ENCODE measurements at regions of chr3 and their contacts with region 1.

Region 1: GRCh38 chr3:124905849-124906248 is 18.7 kb upstream of the ITGB5 start:
- DNase-seq: no peak
- H3K4me3 Mint-ChIP-seq: no peak overlapping the region
- H3K27ac Mint-ChIP-seq: no peak overlapping the region
- H3K4me1 Mint-ChIP-seq: peaks cover under 1% of the 10 kb centered on the region
- H3K27me3 Mint-ChIP-seq: peaks cover 61% of the 10 kb centered on the region

Region 2: DNA sequence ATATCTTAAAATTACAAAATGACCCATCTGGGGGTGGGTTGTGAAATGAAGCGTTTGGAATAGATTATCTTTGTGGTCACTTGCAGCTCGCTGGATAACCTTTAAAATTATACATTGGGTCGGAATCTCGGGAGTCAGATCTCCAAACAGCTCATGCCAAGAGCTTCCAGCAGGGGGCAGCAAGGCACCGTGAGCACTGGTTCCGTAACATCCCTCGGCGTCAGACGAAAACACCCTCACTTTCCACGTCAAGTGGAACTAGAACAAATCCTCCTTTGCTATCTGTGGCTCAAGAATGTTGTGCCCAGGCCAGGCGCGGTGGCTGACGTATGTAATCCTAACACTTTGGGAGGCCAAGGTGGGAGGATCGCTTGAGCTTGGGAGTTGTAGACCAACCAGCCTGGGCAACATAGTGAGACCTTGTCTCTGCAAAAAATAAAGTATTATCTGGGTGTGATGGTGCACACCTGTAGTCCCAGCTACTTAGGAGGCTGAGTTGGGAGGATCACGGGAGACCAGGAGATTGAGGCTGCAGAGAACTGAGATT is 144.5 kb before region 1 on chr3:
- CTCF ChIA-PET with region 1: interaction called, 159 read pairs
- DNase-seq: peak; percentile 84
- H3K4me3 Mint-ChIP-seq: no peak overlapping the region
- H3K27ac Mint-ChIP-seq: no peak overlapping the region
- H3K4me1 Mint-ChIP-seq: peaks cover 4% of the 10 kb centered on the region
- H3K27me3 Mint-ChIP-seq: peaks cover 13% of the 10 kb centered on the region

Region 3: GRCh38 chr3:124768812-124769211 is 137.0 kb before region 1 on chr3:
- CTCF ChIA-PET with region 1: interaction called, 159 read pairs
- DNase-seq: peak; percentile 30
- H3K4me3 Mint-ChIP-seq: no peak overlapping the region
- H3K27ac Mint-ChIP-seq: no peak overlapping the region
- H3K4me1 Mint-ChIP-seq: no peaks in the 10 kb centered on the region
- H3K27me3 Mint-ChIP-seq: peaks cover 51% of the 10 kb centered on the region

Region 4: GRCh38 chr3:124786441-124787241 is 119.2 kb before region 1 on chr3:
- CTCF ChIA-PET with region 1: interaction called, 28 read pairs
- DNase-seq: no peak
- H3K4me3 Mint-ChIP-seq: no peak overlapping the region
- H3K27ac Mint-ChIP-seq: no peak overlapping the region
- H3K4me1 Mint-ChIP-seq: no peaks in the 10 kb centered on the region
- H3K27me3 Mint-ChIP-seq: peaks cover 20% of the 10 kb centered on the region

Region 5: GRCh38 chr3:124845406-124845805 is 60.4 kb before region 1 on chr3:
- CTCF ChIA-PET with region 1: interaction called, 15 read pairs
- DNase-seq: no peak
- H3K4me3 Mint-ChIP-seq: no peak overlapping the region
- H3K27ac Mint-ChIP-seq: no peak overlapping the region
- H3K4me1 Mint-ChIP-seq: no peaks in the 10 kb centered on the region
- H3K27me3 Mint-ChIP-seq: peaks cover 24% of the 10 kb centered on the region

Region 6: DNA sequence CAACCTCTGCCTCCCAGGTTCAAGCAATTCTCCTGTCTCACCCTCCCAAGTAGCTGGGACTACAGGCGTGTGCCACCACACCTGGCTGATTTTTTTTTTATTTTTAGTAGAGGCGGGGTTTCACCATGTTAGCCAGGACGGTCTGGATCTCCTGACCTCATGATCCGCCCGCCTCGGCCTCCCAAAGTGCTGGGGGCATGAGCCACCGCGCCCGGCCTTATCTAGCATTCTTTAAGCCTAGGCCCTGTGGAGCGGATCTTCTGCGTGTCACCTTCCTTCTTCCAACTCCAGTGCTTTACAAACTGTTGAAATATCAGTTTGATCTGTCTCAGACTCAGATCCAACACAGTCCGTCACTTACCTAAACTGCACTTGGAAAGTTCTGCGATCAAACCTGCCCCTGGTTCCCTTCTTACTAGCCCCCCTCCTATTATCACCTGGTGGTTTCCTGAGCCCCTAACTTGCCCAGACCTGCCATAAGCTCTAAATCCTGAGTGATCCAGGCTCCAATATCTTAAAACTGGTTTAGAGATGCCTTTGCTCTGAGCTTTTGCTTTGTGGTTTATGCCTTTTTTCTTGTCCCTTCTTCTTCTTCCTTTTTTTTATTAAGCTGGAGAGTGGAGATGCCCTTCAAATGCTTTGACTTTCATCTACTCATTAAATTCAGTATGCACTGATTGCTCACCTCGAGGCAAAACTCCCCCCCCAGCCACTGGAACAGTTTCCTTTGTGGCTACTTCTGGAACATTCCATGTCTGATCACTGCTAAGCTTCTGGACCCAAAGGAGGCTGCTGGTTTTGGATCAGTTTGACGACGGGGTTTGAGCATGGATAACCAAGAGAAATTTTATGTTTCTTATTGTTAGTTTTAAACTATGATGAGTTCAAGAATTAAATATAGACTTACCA is 15.3 kb before region 1 on chr3:
- CTCF ChIA-PET with region 1: interaction called, 11 read pairs
- DNase-seq: no peak
- H3K4me3 Mint-ChIP-seq: no peak overlapping the region
- H3K27ac Mint-ChIP-seq: no peak overlapping the region
- H3K4me1 Mint-ChIP-seq: peaks cover 10% of the 10 kb centered on the region
- H3K27me3 Mint-ChIP-seq: peaks cover 58% of the 10 kb centered on the region

Region 7: DNA sequence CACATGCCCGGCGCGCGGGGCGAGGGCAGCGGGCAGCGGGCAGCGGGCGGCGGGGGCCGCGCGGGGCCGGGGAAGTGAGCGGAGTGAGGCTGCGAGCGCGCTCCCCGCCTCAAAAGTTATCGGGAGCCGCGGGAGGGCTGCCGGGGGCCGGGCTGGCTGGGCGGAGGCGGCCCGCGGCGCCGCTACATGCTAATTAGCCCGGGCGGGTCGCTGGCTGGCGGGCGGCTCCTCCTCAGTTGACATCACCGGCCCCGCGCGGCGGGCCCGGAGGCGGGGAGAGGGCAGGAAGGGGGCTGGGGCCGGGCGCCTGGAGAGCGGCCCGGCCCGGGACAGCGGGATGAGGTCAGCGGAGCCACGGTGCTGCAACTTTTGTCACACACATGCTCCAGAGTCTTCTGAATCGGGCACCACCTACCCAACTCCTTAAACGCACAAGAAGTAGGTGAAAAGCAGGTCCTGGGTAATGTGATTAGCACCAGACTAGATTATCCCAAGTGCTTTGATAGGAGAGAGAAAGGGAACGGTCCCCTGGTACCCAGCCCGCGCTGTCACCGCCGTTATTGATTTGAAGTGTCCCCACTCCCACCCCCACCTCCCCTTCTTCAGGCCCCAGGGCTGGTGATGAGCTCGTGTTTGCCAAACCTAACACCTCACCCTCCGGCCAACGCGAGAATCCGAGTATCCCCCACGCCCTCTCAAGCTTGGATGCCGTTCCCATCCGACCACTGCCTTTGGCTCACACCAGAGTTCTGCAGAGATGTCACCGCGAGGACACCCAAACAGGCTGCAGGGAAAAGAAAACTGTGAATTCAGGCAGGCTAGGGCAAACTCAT is 150.3 kb after region 1 on chr3 and contains the start of gene HEG1:
- CTCF ChIA-PET with region 1: no interaction called
- DNase-seq: peak; percentile 87
- H3K4me3 Mint-ChIP-seq: peak within 1 kb of the TSS; percentile 97
- H3K27ac Mint-ChIP-seq: peak within 1 kb of the TSS; percentile 93
- H3K4me1 Mint-ChIP-seq: peaks cover 47% of the 10 kb centered on the region
- H3K27me3 Mint-ChIP-seq: peaks cover 39% of the 10 kb centered on the region